ENCODE measurements at regions of chr1 and their contacts with region 1.

Region 1: DNA sequence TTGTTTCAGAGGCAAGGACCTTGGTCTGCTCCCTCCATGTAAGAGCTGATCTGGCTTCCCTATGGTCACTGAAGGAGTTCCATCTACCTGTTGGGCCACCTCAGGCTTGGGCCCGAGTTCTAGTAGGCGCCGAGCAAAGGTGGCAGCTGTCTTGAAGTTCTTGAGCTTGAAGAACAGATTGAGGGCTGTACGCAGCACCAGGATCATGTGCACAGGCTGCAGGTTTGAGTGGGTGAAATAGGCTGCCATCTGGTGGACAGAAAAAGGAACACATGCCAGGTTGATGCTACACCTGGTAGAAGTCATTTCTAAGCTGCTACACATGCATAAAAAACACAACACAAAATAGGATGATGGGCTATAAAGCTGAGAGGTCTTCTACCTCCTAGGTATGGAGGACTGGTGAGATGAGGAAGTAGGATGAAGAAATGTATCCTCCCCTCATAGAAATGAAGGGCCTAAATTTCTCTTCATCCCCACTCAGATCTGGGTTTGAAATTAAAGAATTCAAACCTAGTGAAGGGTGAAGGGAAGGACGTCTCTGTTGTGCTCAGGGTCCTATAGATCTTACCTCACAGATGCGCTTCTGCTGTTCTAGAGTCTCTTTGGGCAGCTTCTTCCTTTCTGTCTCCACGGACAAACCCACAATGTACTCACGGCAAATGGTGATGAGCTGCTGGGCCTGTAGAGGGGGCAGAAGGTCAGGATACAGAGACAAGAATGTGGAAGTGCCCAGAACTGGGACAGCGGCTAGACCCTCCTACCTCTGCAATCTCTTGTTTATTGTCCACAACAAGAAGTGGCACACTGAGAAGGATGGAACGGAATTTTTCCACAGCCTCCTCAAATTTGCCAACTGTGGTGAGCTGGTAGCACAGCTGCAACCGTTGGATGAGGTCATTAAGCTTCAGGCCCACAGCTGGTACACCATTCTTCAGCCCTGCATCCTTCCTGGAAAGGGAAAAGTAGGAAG is 6.6 kb upstream of the PEX19 start:
- DNase-seq: peak; percentile 75
- ATAC-seq: peak; percentile 97
- H3K4me3 Mint-ChIP-seq: no peak overlapping the region
- H3K27ac Mint-ChIP-seq: no peak overlapping the region
- H3K4me1 Mint-ChIP-seq: peaks cover 4% of the 10 kb centered on the region
- H3K27me3 Mint-ChIP-seq: no peaks in the 10 kb centered on the region
- CTCF ChIP-seq: peak; percentile 72

Region 2: GRCh38 chr1:159970932-159971342 is 320.6 kb before region 1 on chr1:
- CTCF ChIA-PET with region 1: no interaction called
- POLR2A ChIA-PET with region 1: no interaction called
- intact Hi-C with region 1: no loop called
- DNase-seq: no peak
- ATAC-seq: no peak
- H3K4me3 Mint-ChIP-seq: no peak overlapping the region
- H3K27ac Mint-ChIP-seq: no peak overlapping the region
- H3K4me1 Mint-ChIP-seq: no peaks in the 10 kb centered on the region
- H3K27me3 Mint-ChIP-seq: peaks cover 14% of the 10 kb centered on the region
- CTCF ChIP-seq: no peak

Region 3: GRCh38 chr1:160098852-160099561 is 192.5 kb before region 1 on chr1:
- CTCF ChIA-PET with region 1: interaction called, 102 read pairs
- POLR2A ChIA-PET with region 1: interaction called, 6 read pairs
- intact Hi-C with region 1: loop called (anchors 5 kb)
- DNase-seq: peak; percentile 99
- ATAC-seq: peak; percentile 89
- H3K4me3 Mint-ChIP-seq: peak overlapping the region; percentile 69
- H3K27ac Mint-ChIP-seq: peak overlapping the region; percentile 89
- H3K4me1 Mint-ChIP-seq: peaks cover 70% of the 10 kb centered on the region
- H3K27me3 Mint-ChIP-seq: no peaks in the 10 kb centered on the region
- CTCF ChIP-seq: no peak

Region 4: GRCh38 chr1:160193091-160193819 is 98.3 kb before region 1 on chr1:
- CTCF ChIA-PET with region 1: interaction called, 102 read pairs
- POLR2A ChIA-PET with region 1: interaction called, 3 read pairs
- intact Hi-C with region 1: loop called (anchors 1 kb)
- DNase-seq: peak; percentile 86
- ATAC-seq: peak; percentile 93
- H3K4me3 Mint-ChIP-seq: no peak overlapping the region
- H3K27ac Mint-ChIP-seq: no peak overlapping the region
- H3K4me1 Mint-ChIP-seq: no peaks in the 10 kb centered on the region
- H3K27me3 Mint-ChIP-seq: peaks cover 2% of the 10 kb centered on the region
- CTCF ChIP-seq: peak; percentile 94

Region 5: GRCh38 chr1:160226623-160227022 is 64.9 kb before region 1 on chr1:
- CTCF ChIA-PET with region 1: interaction called, 20 read pairs
- POLR2A ChIA-PET with region 1: interaction called, 3 read pairs
- intact Hi-C with region 1: no loop called
- DNase-seq: no peak
- ATAC-seq: no peak
- H3K4me3 Mint-ChIP-seq: no peak overlapping the region
- H3K27ac Mint-ChIP-seq: no peak overlapping the region
- H3K4me1 Mint-ChIP-seq: no peaks in the 10 kb centered on the region
- H3K27me3 Mint-ChIP-seq: no peaks in the 10 kb centered on the region
- CTCF ChIP-seq: no peak

Region 6: GRCh38 chr1:160261893-160262794 is 29.4 kb before region 1 on chr1 and contains the start of gene DCAF8:
- CTCF ChIA-PET with region 1: interaction called, 57 read pairs
- POLR2A ChIA-PET with region 1: interaction called, 5 read pairs
- intact Hi-C with region 1: no loop called
- DNase-seq: peak; percentile 99
- ATAC-seq: peak; percentile 92
- H3K4me3 Mint-ChIP-seq: peak within 1 kb of the TSS; percentile 83
- H3K27ac Mint-ChIP-seq: peak within 1 kb of the TSS; percentile 97
- H3K4me1 Mint-ChIP-seq: peaks cover 41% of the 10 kb centered on the region
- H3K27me3 Mint-ChIP-seq: no peaks in the 10 kb centered on the region
- CTCF ChIP-seq: no peak
- total RNA-seq, gene DCAF8: 116 TPM

Region 7: GRCh38 chr1:160315359-160315758 is 23.8 kb after region 1 on chr1:
- CTCF ChIA-PET with region 1: interaction called, 15 read pairs
- POLR2A ChIA-PET with region 1: no interaction called
- intact Hi-C with region 1: no loop called
- DNase-seq: no peak
- ATAC-seq: no peak
- H3K4me3 Mint-ChIP-seq: no peak overlapping the region
- H3K27ac Mint-ChIP-seq: peak overlapping the region; percentile 63
- H3K4me1 Mint-ChIP-seq: peaks cover 17% of the 10 kb centered on the region
- H3K27me3 Mint-ChIP-seq: no peaks in the 10 kb centered on the region
- CTCF ChIP-seq: no peak

Region 8: GRCh38 chr1:160354388-160354985 is 63.0 kb after region 1 on chr1:
- CTCF ChIA-PET with region 1: interaction called, 13 read pairs
- POLR2A ChIA-PET with region 1: interaction called, 4 read pairs
- intact Hi-C with region 1: no loop called
- DNase-seq: peak; percentile 24
- ATAC-seq: peak; percentile 70
- H3K4me3 Mint-ChIP-seq: no peak overlapping the region
- H3K27ac Mint-ChIP-seq: no peak overlapping the region
- H3K4me1 Mint-ChIP-seq: peaks cover 2% of the 10 kb centered on the region
- H3K27me3 Mint-ChIP-seq: no peaks in the 10 kb centered on the region
- CTCF ChIP-seq: peak; percentile 11

Region 9: GRCh38 chr1:160420881-160421842 is 129.6 kb after region 1 on chr1:
- CTCF ChIA-PET with region 1: no interaction called
- POLR2A ChIA-PET with region 1: no interaction called
- intact Hi-C with region 1: no loop called
- DNase-seq: no peak
- ATAC-seq: no peak
- H3K4me3 Mint-ChIP-seq: no peak overlapping the region
- H3K27ac Mint-ChIP-seq: no peak overlapping the region
- H3K4me1 Mint-ChIP-seq: no peaks in the 10 kb centered on the region
- H3K27me3 Mint-ChIP-seq: no peaks in the 10 kb centered on the region
- CTCF ChIP-seq: no peak

Region 10: GRCh38 chr1:160499631-160500030 is 208.1 kb after region 1 on chr1:
- CTCF ChIA-PET with region 1: no interaction called
- POLR2A ChIA-PET with region 1: no interaction called
- intact Hi-C with region 1: no loop called
- DNase-seq: no peak
- ATAC-seq: no peak
- H3K4me3 Mint-ChIP-seq: no peak overlapping the region
- H3K27ac Mint-ChIP-seq: peak overlapping the region; percentile 32
- H3K4me1 Mint-ChIP-seq: peaks cover 84% of the 10 kb centered on the region
- H3K27me3 Mint-ChIP-seq: no peaks in the 10 kb centered on the region
- CTCF ChIP-seq: no peak